Caco-2 (cell line): ENCODE measurements at regions of chr14 and their contacts with region 1.

Region 1: GRCh38 chr14:75906676-75907280 is 75.0 kb downstream of the TGFB3 start:
- DNase-seq: peak in 1 of 2 experiments; percentile 62
- H3K4me3 ChIP-seq: no peak overlapping the region
- H3K4me3 Mint-ChIP-seq: no peak overlapping the region
- H3K27ac Mint-ChIP-seq: no peak overlapping the region
- H3K4me1 ChIP-seq: peaks cover 10% of the 10 kb centered on the region
- H3K4me1 Mint-ChIP-seq: peaks cover 13% of the 10 kb centered on the region
- H3K27me3 ChIP-seq: no peaks in the 10 kb centered on the region
- H3K27me3 Mint-ChIP-seq: no peaks in the 10 kb centered on the region
- CTCF ChIP-seq: peak; percentile 76 to 81

Region 2: GRCh38 chr14:75709207-75709812 is 197.5 kb before region 1 on chr14:
- CTCF ChIA-PET with region 1: interaction called, 6 read pairs
- POLR2A ChIA-PET with region 1: no interaction called
- intact Hi-C with region 1: loop called (anchors 2 kb)
- DNase-seq: peak; percentile 72 to 74
- H3K4me3 ChIP-seq: no peak overlapping the region
- H3K4me3 Mint-ChIP-seq: no peak overlapping the region
- H3K27ac Mint-ChIP-seq: no peak overlapping the region
- H3K4me1 ChIP-seq: peaks cover 21% of the 10 kb centered on the region
- H3K4me1 Mint-ChIP-seq: peaks cover 24% of the 10 kb centered on the region
- H3K27me3 ChIP-seq: no peaks in the 10 kb centered on the region
- H3K27me3 Mint-ChIP-seq: no peaks in the 10 kb centered on the region
- CTCF ChIP-seq: peak; percentile 69 to 76

Region 3: GRCh38 chr14:75794615-75795038 is 112.2 kb before region 1 on chr14:
- CTCF ChIA-PET with region 1: interaction called, 16 read pairs
- POLR2A ChIA-PET with region 1: no interaction called
- intact Hi-C with region 1: no loop called
- DNase-seq: peak in 1 of 2 experiments; percentile 42
- H3K4me3 ChIP-seq: no peak overlapping the region
- H3K4me3 Mint-ChIP-seq: no peak overlapping the region
- H3K27ac Mint-ChIP-seq: no peak overlapping the region
- H3K4me1 ChIP-seq: no peaks in the 10 kb centered on the region
- H3K4me1 Mint-ChIP-seq: peaks cover 5% of the 10 kb centered on the region
- H3K27me3 ChIP-seq: no peaks in the 10 kb centered on the region
- H3K27me3 Mint-ChIP-seq: no peaks in the 10 kb centered on the region
- CTCF ChIP-seq: peak; percentile 28 to 57

Region 4: GRCh38 chr14:75972801-75973421 is 66.1 kb after region 1 on chr14:
- CTCF ChIA-PET with region 1: interaction called, 18 read pairs
- POLR2A ChIA-PET with region 1: interaction called, 4 read pairs
- intact Hi-C with region 1: no loop called
- DNase-seq: no peak
- H3K4me3 ChIP-seq: no peak overlapping the region
- H3K4me3 Mint-ChIP-seq: no peak overlapping the region
- H3K27ac Mint-ChIP-seq: no peak overlapping the region
- H3K4me1 ChIP-seq: peaks cover 11% of the 10 kb centered on the region
- H3K4me1 Mint-ChIP-seq: peaks cover 13% of the 10 kb centered on the region
- H3K27me3 ChIP-seq: no peaks in the 10 kb centered on the region
- H3K27me3 Mint-ChIP-seq: no peaks in the 10 kb centered on the region
- CTCF ChIP-seq: no peak

Region 5: DNA sequence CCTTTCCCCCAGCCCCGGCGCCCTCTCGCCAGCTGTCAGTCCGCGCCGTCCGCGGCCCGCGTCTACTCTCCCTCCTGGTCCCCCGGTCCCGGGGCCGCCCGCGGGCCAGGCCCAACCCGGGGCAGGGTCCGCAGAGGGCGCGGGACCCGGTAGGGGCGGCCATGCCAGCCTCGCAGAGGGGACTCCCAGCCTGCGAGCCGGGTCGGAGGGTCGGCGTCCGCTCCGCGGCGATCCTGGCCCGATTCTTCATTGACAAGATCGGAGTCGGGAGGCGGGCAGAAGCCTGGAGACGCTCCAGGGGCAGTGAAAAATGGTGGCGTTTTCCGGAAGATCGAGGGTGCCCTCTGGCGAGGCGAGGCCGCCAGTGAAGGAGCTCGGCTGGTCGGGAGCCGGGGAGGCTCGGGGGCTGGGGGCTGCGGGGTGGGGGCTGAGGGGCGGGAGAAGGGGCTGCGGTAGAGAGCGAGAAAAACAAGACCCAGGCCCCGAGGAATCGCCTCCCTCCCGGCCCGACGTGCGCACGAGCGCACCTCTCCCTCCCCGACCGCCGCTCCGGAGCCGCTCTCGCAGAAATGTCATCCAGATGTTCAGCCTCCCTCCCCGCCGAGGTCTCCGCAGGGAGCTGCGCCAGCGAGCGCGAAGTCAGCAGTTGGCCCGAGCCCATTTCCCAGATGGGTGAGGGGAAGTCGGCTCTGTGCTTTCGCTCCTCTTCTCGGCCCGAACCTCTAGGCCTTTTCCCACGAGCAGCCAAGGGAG is 75.7 kb after region 1 on chr14:
- CTCF ChIA-PET with region 1: interaction called, 96 read pairs
- POLR2A ChIA-PET with region 1: interaction called, 4 read pairs
- intact Hi-C with region 1: loop called (anchors 1 kb)
- DNase-seq: peak; percentile 78 to 89
- H3K4me3 ChIP-seq: peak overlapping the region; percentile 56
- H3K4me3 Mint-ChIP-seq: peak overlapping the region; percentile 79
- H3K27ac Mint-ChIP-seq: peak overlapping the region; percentile 39
- H3K4me1 ChIP-seq: peaks cover 8% of the 10 kb centered on the region
- H3K4me1 Mint-ChIP-seq: peaks cover 34% of the 10 kb centered on the region
- H3K27me3 ChIP-seq: no peaks in the 10 kb centered on the region
- H3K27me3 Mint-ChIP-seq: no peaks in the 10 kb centered on the region
- CTCF ChIP-seq: peak; percentile 77 to 78